Right ventricle myocardium inferior (tissue), 1 donor: ENCODE measurements at regions of chr1 and their contacts with region 1.

Region 1: GRCh38 chr1:38046884-38047602 is 450 bp upstream of the POU3F1 start:
- DNase-seq: peak; percentile 95
- ATAC-seq: peak; percentile 98

Region 2: GRCh38 chr1:38084700-38085099 is 37.7 kb after region 1 on chr1:
- intact Hi-C with region 1: loop called (anchors 1 kb)
- DNase-seq: no peak
- ATAC-seq: peak; percentile 94

Region 3: DNA sequence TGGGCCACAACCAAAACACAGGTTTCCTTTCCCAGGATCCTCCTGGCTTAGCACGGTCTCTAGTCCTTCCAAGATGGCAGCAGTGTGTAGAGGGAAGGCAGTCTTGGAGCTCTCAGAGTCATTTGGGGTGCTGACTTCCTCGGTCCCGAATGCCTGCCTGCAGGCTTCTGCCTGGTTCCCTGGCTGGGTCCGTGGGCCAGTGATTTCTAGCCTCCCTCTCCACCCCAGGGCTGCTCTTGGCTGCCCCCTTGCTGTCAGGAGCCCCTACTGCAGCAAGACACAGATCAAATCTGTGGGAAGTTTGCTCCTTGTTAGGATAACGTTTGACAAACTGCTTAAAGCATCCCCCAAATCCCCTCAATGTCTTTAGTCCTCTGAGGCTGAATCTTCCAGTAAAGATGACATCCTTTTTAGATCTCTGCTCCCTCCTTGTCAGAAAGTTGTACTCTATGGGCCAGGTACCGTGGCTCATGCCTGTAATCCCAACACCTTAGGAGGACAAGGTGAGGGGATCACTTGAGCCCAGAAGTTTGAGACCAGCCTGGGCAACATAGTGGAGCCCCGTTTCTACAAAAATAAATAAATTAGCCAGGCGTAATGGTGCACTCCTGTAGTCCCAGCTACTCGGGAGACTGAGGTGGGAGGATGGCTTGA is 540.1 kb after region 1 on chr1:
- intact Hi-C with region 1: loop called (anchors 10 kb)
- DNase-seq: no peak
- ATAC-seq: peak; percentile 31

Region 4: GRCh38 chr1:38834937-38835827 is 788.1 kb after region 1 on chr1:
- intact Hi-C with region 1: loop called (anchors 5 kb)
- DNase-seq: no peak
- ATAC-seq: peak; percentile 74